ENCODE measurements at regions of chr2 and their contacts with region 1.

Region 1: GRCh38 chr2:109348671-109349550 is 219.9 kb downstream of the SH3RF3 start:
- DNase-seq: no peak
- ATAC-seq: no peak
- H3K4me3 ChIP-seq: no peak overlapping the region
- H3K27ac ChIP-seq: no peak overlapping the region
- H3K4me1 ChIP-seq: peaks cover 39% of the 10 kb centered on the region
- H3K27me3 ChIP-seq: no peaks in the 10 kb centered on the region
- CTCF ChIP-seq: no peak

Region 2: GRCh38 chr2:109396202-109397180 is 47.6 kb after region 1 on chr2:
- intact Hi-C with region 1: loop called (anchors 10 kb)
- DNase-seq: no peak
- ATAC-seq: no peak
- H3K4me3 ChIP-seq: no peak overlapping the region
- H3K27ac ChIP-seq: no peak overlapping the region
- H3K4me1 ChIP-seq: no peaks in the 10 kb centered on the region
- H3K27me3 ChIP-seq: no peaks in the 10 kb centered on the region
- CTCF ChIP-seq: no peak

Region 3: DNA sequence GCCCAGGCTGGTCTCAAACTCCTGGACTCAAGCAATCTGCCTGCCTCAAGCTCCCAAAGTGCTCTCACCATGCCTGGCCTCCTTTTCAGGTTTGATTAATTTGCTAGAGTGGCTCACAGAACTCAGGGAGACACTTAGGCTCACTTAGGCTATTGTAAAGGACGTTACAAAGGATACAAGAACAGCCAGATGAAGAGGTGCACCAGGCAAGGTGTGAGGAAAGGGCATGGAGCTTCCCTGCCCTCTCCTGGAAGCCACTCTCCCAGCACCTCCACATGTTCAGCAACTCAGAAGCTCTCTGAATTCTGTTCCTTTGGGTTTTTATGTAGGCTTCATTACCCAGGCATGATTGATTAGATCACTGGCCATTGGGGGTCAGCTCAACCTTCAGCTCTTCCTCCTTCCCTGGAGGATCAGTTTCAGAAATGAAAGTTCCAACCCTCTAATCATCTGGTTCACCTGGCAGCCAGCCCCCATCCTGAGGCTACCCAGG is 366.4 kb after region 1 on chr2:
- intact Hi-C with region 1: no loop called
- DNase-seq: peak; percentile 28
- ATAC-seq: peak; percentile 86
- H3K4me3 ChIP-seq: no peak overlapping the region
- H3K27ac ChIP-seq: no peak overlapping the region
- H3K4me1 ChIP-seq: no peaks in the 10 kb centered on the region
- H3K27me3 ChIP-seq: no peaks in the 10 kb centered on the region
- CTCF ChIP-seq: peak; percentile 51

Measured in upper lobe of right lung (tissue), 1 donor.